Activated CD4-positive, alpha-beta T cell treated with anti-CD3 and anti-CD28 coated beads, Interleukin-2, amount 10 ng/mL, durations not matched to agents 24 days and 14 days (primary cell): ENCODE measurements at regions of chr5 and their contacts with region 1.

Region 1: DNA sequence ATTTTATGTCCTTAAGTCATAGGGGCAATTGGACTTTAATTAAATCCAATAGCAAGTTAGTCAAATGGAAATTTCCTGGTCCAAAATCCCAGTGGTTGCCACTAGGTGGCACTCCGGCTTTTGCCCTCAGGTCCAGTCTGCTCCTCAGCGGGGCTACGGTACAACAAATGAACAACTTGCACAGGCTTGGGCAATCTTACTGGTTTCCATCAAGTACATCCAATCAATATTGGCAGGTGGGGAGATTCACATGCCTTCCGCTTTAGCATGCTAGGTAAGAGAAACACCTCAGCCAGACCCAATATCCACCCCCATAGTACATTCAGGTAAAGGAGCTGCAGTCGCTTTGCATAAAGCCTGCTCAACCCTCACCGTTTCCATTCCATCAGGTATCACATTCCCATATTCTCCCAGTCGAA is 6.3 kb upstream of the MXD3 start:
- DNase-seq: peak; percentile 92
- H3K4me3 Mint-ChIP-seq: no peak overlapping the region
- H3K27ac Mint-ChIP-seq: no peak overlapping the region
- H3K4me1 Mint-ChIP-seq: peaks cover 24% of the 10 kb centered on the region
- H3K27me3 Mint-ChIP-seq: no peaks in the 10 kb centered on the region

Region 2: GRCh38 chr5:177113566-177114424 is 204.2 kb before region 1 on chr5:
- intact Hi-C with region 1: no loop called
- DNase-seq: peak; percentile 94
- H3K4me3 Mint-ChIP-seq: no peak overlapping the region
- H3K27ac Mint-ChIP-seq: no peak overlapping the region
- H3K4me1 Mint-ChIP-seq: peaks cover 19% of the 10 kb centered on the region
- H3K27me3 Mint-ChIP-seq: no peaks in the 10 kb centered on the region

Region 3: DNA sequence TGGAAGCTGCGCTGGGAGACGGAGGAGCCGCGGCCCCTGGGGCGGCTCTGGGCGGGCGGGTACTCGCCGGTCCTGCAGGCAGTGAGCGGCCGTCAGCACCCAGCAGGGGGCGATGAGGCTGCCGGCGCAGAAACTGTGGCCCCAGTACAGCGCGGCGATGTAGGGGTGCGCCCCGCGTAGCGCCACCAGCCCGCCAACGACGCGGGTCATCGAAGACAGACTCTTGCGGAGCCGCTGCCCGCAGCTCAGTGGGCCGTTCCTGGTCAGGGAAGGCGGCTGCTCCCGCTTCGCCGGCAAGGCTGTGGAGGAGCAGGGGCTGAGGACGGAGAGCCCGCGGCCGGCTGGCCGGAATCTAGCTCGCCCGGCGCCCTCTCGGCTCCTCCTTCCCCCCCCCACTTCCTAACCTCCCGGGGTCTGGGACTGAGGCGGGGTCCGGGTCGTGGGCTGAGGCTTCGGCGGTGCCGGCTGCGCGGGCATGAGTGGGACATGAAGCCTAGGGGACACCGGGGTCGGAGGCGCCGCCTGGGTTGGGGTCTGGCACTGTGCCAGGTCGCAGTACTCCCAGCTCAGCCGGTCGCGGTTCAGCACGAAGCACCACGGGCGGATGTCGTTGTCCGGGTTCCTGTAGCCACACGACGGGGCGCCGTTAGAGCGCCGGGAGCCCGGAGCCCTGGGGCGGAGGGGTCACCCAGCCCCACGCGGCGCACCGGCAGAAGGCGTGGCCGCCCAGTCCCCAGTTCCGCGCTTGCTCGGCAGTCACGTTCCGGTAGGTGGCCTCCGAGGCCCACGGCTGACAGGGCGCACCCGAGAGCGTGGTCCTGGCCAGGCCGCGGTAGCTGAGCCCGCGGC is 86.0 kb after region 1 on chr5:
- intact Hi-C with region 1: loop called (anchors 1 kb)
- DNase-seq: peak; percentile 95
- H3K4me3 Mint-ChIP-seq: peak overlapping the region; percentile 88
- H3K27ac Mint-ChIP-seq: peak overlapping the region; percentile 67
- H3K4me1 Mint-ChIP-seq: peaks cover 17% of the 10 kb centered on the region
- H3K27me3 Mint-ChIP-seq: peaks cover 33% of the 10 kb centered on the region